ENCODE measurements at regions of chr1 and their contacts with region 1.

Region 1: GRCh38 chr1:37859507-37860345 is at the start of gene MTF1:
- DNase-seq: peak; percentile 91 to 99 (median 96)
- ATAC-seq: peak; percentile 99
- H3K4me3 ChIP-seq: peak within 1 kb of the TSS; percentile 88 to 99
- H3K4me3 Mint-ChIP-seq: peak within 1 kb of the TSS; percentile 98
- H3K27ac ChIP-seq: peak within 1 kb of the TSS; percentile 94 to 96
- H3K27ac Mint-ChIP-seq: peak within 1 kb of the TSS; percentile 94
- H3K4me1 ChIP-seq: peaks cover 19% of the 10 kb centered on the region
- H3K4me1 Mint-ChIP-seq: peaks cover 34% of the 10 kb centered on the region
- H3K27me3 ChIP-seq: no peaks in the 10 kb centered on the region
- H3K27me3 Mint-ChIP-seq: no peaks in the 10 kb centered on the region
- CTCF ChIP-seq: peak; percentile 79
- total RNA-seq, gene MTF1: 30.3 to 30.8 TPM

Region 2: DNA sequence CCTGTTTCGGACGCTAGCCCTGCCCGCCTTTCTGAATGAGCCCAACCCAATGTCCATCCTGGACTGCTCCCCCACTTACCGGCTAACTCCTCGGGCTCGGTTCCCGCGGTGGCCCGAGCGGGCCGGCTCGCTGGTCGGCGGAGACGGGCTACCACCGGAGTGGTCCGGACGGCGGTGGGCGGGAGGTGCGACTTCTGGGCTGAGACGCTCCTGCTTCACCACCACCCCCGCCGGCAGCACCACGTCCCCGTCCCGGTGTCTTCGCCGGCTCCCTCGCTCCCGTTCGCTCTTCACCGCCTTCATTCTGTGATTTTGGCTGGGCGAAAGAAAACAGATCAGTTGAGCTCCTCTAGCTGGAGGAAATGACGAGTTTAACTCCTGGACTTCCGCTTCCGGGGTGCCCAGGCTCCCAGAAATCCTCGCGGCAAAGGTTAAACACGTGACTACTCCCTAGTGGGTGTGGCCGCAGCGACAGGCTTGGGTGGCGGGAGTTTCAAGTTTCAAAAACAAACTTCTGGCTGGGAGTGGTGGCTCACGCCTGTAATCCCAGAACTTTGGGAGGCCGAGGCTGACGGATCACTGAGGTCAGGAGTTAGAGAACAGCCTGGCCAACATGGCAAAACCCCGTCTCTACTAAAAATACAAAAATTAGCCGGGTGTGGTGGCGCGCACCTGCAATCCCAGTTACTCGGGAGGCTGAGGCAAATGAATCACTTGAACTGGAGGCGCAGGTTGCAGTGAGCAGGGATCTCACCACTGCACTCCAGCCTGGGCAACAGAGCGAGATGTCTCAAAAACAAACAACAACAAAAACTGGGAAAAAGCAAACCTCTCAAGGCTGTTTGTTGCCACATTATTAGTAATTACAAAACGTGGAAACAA is 305.6 kb before region 1 on chr1 and contains the start of gene SNIP1:
- CTCF ChIA-PET with region 1: no interaction called
- POLR2A ChIA-PET with region 1: no interaction called
- intact Hi-C with region 1: loop called in 1 of 2 experiments (anchors 2 kb)
- DNase-seq: peak; percentile 84 to 96 (median 91)
- ATAC-seq: peak; percentile 95
- H3K4me3 ChIP-seq: peak within 1 kb of the TSS; percentile 88 to 97
- H3K4me3 Mint-ChIP-seq: peak within 1 kb of the TSS; percentile 100
- H3K27ac ChIP-seq: peak within 1 kb of the TSS; percentile 88 to 91
- H3K27ac Mint-ChIP-seq: peak within 1 kb of the TSS; percentile 100
- H3K4me1 ChIP-seq: peaks cover 24% of the 10 kb centered on the region
- H3K4me1 Mint-ChIP-seq: peaks cover 43% of the 10 kb centered on the region
- H3K27me3 ChIP-seq: no peaks in the 10 kb centered on the region
- H3K27me3 Mint-ChIP-seq: peaks cover 2% of the 10 kb centered on the region
- CTCF ChIP-seq: no peak
- total RNA-seq, gene SNIP1: 71.7 to 84.2 TPM

Region 3: DNA sequence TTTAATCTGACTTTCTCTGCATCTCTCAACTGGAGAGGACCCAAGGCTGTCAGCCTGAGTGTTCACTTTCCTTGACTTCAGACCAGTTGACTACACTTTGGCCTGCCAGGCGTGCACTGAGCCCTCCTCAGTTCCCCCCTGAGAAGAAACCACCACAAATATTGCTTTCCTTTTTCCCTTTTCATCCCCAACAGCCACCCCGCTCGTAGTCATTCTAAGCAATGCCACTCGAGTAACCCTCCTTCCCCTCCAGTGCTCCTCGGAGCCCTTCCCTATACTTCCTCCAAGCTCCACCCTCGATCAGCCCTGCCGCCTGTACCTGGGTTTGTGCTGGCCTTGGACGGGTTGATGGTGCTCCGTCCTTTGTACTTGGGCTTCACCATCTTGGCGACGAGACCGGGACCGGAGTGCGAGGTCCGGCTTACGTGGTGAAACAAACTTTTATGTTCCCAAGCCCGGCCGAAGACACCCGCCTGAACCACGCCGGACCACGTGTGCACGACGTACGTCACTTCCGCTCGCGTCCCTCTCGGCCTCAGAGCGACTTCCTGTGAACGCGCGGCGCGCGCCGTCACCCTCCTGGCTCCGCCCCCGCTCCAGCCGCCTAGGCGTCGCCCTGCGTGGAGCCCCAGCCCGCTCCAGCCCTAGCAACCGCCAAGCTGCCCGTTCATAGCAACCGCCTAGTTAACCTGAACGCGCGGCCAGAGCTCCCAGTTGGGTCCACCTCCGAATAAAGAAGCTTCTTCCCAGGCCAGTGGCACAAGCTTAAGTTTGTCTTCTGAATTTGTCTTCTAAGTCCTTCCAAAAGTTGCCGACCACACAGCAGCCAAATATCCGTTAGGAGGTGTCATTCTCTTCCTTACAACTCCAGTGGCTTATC is 264.0 kb before region 1 on chr1 and contains the start of gene GNL2:
- CTCF ChIA-PET with region 1: no interaction called
- POLR2A ChIA-PET with region 1: no interaction called
- intact Hi-C with region 1: loop called (anchors 1 to 5 kb)
- DNase-seq: peak; percentile 92 to 99 (median 96)
- ATAC-seq: peak; percentile 95
- H3K4me3 ChIP-seq: peak within 1 kb of the TSS; percentile 67 to 88
- H3K4me3 Mint-ChIP-seq: peak within 1 kb of the TSS; percentile 100
- H3K27ac ChIP-seq: peak within 1 kb of the TSS; percentile 68 to 93
- H3K27ac Mint-ChIP-seq: peak within 1 kb of the TSS; percentile 99
- H3K4me1 ChIP-seq: peaks cover 23% of the 10 kb centered on the region
- H3K4me1 Mint-ChIP-seq: peaks cover 36% of the 10 kb centered on the region
- H3K27me3 ChIP-seq: no peaks in the 10 kb centered on the region
- H3K27me3 Mint-ChIP-seq: no peaks in the 10 kb centered on the region
- CTCF ChIP-seq: no peak
- total RNA-seq, gene GNL2: 54.6 to 55.2 TPM

Region 4: GRCh38 chr1:37634244-37634991 is 225.3 kb before region 1 on chr1 and contains the start of gene RSPO1:
- CTCF ChIA-PET with region 1: no interaction called
- POLR2A ChIA-PET with region 1: no interaction called
- intact Hi-C with region 1: no loop called
- DNase-seq: no peak
- ATAC-seq: no peak
- H3K4me3 ChIP-seq: no peak within 1 kb of the TSS
- H3K4me3 Mint-ChIP-seq: peak within 1 kb of the TSS; percentile 45
- H3K27ac ChIP-seq: no peak within 1 kb of the TSS
- H3K27ac Mint-ChIP-seq: no peak within 1 kb of the TSS
- H3K4me1 ChIP-seq: no peaks in the 10 kb centered on the region
- H3K4me1 Mint-ChIP-seq: peaks cover 10% of the 10 kb centered on the region
- H3K27me3 ChIP-seq: peaks cover 13 to 22% of the 10 kb centered on the region in 2 experiments
- H3K27me3 Mint-ChIP-seq: peaks cover 65% of the 10 kb centered on the region
- CTCF ChIP-seq: no peak
- total RNA-seq, gene RSPO1: not detected

Region 5: DNA sequence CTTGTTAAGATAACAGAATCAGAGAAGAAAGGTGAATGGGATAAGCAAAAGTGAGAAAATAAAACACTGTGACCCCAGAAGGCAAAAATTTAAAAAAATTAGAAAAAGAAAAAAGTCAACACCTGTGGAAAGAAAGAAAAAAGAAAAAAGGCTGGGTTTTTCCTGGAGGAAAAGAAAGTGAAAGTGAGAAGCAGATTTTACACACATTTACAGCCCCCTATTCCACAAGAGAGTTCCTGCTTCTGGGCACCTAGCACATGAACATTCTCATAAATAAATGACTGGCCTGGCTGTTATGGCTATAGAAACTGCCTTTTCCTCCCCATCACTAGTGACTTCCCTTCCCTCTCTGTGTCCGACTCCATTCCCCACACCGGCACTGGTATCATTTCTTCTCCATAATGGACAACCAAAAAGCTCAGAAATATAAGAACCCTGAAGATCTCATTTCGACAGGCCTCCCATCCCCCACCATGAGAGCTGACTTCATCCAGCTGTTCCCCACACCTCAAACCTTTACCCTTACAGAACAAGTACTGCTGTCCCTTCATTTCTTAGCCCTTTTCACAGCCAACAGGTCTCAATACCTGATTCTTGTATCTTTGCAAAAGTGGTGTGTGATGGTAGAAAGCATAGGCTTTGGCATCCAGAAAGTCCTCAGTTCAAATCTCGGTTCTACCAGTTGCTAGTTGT is 12.9 kb before region 1 on chr1:
- CTCF ChIA-PET with region 1: interaction called, 26 read pairs
- POLR2A ChIA-PET with region 1: interaction called, 4 read pairs
- intact Hi-C with region 1: no loop called
- DNase-seq: no peak
- ATAC-seq: no peak
- H3K4me3 ChIP-seq: no peak overlapping the region
- H3K4me3 Mint-ChIP-seq: peak overlapping the region; percentile 44
- H3K27ac ChIP-seq: no peak overlapping the region
- H3K27ac Mint-ChIP-seq: peak overlapping the region; percentile 49
- H3K4me1 ChIP-seq: peaks cover 33% of the 10 kb centered on the region
- H3K4me1 Mint-ChIP-seq: peaks cover 49% of the 10 kb centered on the region
- H3K27me3 ChIP-seq: no peaks in the 10 kb centered on the region
- H3K27me3 Mint-ChIP-seq: no peaks in the 10 kb centered on the region
- CTCF ChIP-seq: no peak

Region 6: DNA sequence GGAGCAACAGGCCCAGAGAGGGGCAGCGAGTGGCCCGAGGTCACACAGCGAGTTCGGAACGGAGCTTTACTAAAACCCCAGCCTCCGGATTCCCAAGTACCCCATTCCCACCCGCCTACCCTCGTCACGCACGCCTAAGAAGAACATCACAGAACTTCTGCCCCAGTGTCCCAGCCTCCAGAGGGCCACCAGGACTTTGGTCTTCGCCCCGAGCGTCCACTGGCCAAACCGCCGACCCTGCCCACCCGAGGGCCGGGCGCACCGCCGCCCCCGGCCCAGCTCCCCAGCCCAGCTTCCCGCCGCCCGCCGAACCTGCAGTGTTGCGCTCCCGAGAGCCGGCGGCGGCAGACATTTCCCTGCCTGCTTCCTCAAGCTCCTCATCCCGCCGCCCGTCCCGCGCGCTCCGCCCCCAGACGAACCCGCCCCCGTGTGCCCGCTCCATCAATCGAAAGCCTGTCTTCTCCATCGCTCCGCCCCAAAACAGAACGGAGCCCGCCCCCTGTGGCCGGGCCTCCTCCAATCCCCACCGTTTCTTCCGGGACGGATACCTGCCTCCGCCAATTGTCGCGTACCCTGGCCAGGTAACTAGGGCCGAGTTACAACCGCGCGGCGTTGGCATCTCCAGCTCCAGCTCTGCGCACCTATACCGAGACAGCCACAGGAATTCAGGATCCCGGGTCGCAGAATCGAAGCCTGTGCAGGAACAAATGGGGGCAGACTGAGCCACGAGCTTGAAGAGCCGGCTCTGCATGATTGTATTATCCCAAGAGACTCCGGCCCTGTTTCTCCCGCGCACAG is 71.8 kb after region 1 on chr1:
- CTCF ChIA-PET with region 1: interaction called, 11 read pairs
- POLR2A ChIA-PET with region 1: interaction called, 6 read pairs
- intact Hi-C with region 1: loop called (anchors 2 kb)
- DNase-seq: peak; percentile 96 to 98 (median 97)
- ATAC-seq: peak; percentile 98
- H3K4me3 ChIP-seq: peak overlapping the region; percentile 79 to 89
- H3K4me3 Mint-ChIP-seq: peak overlapping the region; percentile 100
- H3K27ac ChIP-seq: peak overlapping the region; percentile 40 to 66
- H3K27ac Mint-ChIP-seq: peak overlapping the region; percentile 89
- H3K4me1 ChIP-seq: peaks cover 26% of the 10 kb centered on the region
- H3K4me1 Mint-ChIP-seq: peaks cover 40% of the 10 kb centered on the region
- H3K27me3 ChIP-seq: no peaks in the 10 kb centered on the region
- H3K27me3 Mint-ChIP-seq: no peaks in the 10 kb centered on the region
- CTCF ChIP-seq: no peak

Region 7: GRCh38 chr1:38012363-38013226 is 152.9 kb after region 1 on chr1 and contains the start of gene UTP11:
- CTCF ChIA-PET with region 1: interaction called, 10 read pairs
- POLR2A ChIA-PET with region 1: no interaction called
- intact Hi-C with region 1: loop called (anchors 1 kb)
- DNase-seq: peak; percentile 80 to 97 (median 88)
- ATAC-seq: peak; percentile 86
- H3K4me3 ChIP-seq: peak within 1 kb of the TSS; percentile 66 to 94
- H3K4me3 Mint-ChIP-seq: peak within 1 kb of the TSS; percentile 99
- H3K27ac ChIP-seq: peak within 1 kb of the TSS; percentile 74 to 94
- H3K27ac Mint-ChIP-seq: peak within 1 kb of the TSS; percentile 99
- H3K4me1 ChIP-seq: peaks cover 40% of the 10 kb centered on the region
- H3K4me1 Mint-ChIP-seq: peaks cover 57% of the 10 kb centered on the region
- H3K27me3 ChIP-seq: no peaks in the 10 kb centered on the region
- H3K27me3 Mint-ChIP-seq: no peaks in the 10 kb centered on the region
- CTCF ChIP-seq: no peak
- total RNA-seq, gene UTP11: 12.8 to 14.0 TPM

Region 8: DNA sequence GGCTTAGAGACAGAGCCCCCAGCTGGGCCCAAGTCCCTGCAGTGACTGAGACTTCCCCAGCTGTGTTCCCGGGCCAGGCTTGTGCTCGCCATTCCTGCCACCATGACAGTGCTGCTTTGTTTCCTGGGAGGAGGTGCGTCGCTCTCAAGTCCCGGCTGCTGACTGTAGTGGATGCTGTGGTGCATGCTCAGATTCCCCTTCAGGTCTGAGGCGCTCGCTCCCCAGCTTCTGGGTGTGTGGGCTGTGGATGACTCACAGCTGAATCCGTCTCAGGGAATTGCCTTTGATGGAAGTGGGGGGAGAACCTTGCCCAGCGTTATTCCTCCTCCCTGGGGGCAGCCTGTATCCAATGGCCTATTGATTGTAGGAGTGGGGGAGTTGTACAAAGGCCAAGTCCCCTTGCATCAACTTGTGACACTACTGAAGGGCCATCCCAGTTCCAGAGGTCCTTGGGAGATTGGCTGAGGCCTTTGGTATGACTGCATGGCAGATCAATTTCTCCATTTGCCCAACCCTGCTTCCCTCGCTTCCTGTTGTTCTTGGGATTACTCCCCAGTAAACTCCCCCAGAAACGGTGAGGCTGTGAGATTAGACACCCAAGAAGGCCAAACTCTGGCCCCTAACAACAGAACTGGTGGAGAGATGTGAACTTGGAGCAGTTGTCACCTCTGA is 204.6 kb after region 1 on chr1:
- CTCF ChIA-PET with region 1: no interaction called
- POLR2A ChIA-PET with region 1: no interaction called
- intact Hi-C with region 1: no loop called
- DNase-seq: no peak
- ATAC-seq: no peak
- H3K4me3 ChIP-seq: no peak overlapping the region
- H3K4me3 Mint-ChIP-seq: no peak overlapping the region
- H3K27ac ChIP-seq: no peak overlapping the region
- H3K27ac Mint-ChIP-seq: no peak overlapping the region
- H3K4me1 ChIP-seq: no peaks in the 10 kb centered on the region
- H3K4me1 Mint-ChIP-seq: no peaks in the 10 kb centered on the region
- H3K27me3 ChIP-seq: no peaks in the 10 kb centered on the region
- H3K27me3 Mint-ChIP-seq: peaks cover 15% of the 10 kb centered on the region
- CTCF ChIP-seq: no peak